Activated CD4-positive, alpha-beta memory T cell treated with anti-CD3 and anti-CD28 coated beads for 36 hours (primary cell): ENCODE measurements at regions of chr2 and their contacts with region 1.

Region 1: GRCh38 chr2:161063157-161063954 is 96.9 kb upstream of the TANK start:
- DNase-seq: peak; percentile 74
- H3K4me3 Mint-ChIP-seq: no peak overlapping the region
- H3K27ac Mint-ChIP-seq: no peak overlapping the region
- H3K4me1 Mint-ChIP-seq: peaks cover 10% of the 10 kb centered on the region
- H3K27me3 Mint-ChIP-seq: no peaks in the 10 kb centered on the region

Region 2: DNA sequence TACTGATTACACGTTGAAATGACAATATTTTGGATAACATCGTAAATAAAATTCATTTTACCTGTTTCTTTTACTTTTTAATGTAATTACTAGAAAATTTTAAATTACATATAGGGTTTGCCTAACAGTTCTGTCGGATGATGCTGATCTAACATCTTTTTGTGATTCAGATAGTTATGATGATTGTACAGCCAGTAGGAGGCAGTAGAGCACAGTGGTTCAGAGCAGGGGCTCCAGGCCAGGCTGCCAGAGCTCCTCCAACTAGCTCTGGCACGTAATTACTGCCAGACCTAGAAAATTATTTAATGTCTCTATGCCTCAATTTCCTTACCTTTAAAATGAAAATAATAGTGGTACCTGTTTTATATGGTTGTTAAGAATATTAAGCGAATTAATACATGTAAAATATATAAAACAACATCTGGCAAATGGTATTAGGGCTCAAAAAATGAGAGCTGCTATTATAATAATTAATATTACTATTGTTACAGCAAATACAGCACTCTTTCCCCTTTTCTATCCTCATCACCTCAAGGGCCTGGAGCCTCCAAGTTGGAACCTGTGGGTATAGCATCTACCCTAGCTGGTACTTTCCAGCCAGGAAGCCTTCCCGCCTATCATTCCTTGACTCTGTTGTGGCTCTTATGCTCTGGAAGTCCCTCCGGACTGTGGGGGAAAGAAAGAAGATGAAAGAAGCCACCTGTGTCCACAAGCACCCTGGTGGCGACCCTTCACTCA is 953.3 kb before region 1 on chr2:
- CTCF ChIA-PET with region 1: interaction called, 26 read pairs
- POLR2A ChIA-PET with region 1: no interaction called
- intact Hi-C with region 1: loop called (anchors 1 kb)
- DNase-seq: peak; percentile 65
- H3K4me3 Mint-ChIP-seq: no peak overlapping the region
- H3K27ac Mint-ChIP-seq: no peak overlapping the region
- H3K4me1 Mint-ChIP-seq: no peaks in the 10 kb centered on the region
- H3K27me3 Mint-ChIP-seq: peaks cover 21% of the 10 kb centered on the region

Region 3: DNA sequence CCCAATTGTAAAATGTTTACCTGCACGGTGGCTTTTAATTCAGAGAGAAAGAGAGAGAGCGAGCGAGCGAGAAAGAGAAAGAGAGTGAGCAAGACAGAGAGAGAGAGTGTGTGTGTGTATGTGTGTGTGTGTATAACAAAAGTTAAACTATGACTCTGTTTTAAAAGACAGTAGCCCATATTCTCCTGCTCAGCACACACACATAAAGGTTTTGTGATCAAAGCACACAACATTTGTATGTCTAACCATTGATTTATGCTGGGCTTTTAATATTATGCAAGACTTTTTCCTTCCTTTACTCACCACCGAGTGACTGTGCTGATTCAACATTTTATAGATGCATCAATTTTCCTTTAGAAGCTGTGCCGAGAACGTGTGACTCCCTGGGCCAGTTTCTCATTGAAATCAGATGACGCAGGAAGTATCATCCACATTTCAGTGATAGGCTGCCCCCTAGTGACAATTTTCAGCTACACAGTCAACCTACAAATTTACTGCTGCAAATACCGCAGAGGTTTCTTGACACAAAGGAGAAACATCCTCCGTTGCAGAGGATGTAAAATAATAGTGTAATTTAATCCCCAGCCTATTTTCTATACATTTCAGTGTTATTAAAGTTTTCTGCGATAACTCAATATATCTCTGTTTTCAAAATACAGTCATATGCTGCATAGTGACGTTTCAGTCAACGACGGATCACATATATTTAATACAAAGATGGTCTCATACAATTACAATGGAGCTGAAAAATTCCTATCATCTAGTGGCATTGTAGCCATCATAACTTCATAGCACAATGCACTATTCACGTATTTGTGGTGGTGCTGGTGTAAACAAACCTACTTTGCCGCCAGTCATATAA is 69.0 kb before region 1 on chr2:
- CTCF ChIA-PET with region 1: interaction called, 27 read pairs
- POLR2A ChIA-PET with region 1: no interaction called
- intact Hi-C with region 1: loop called (anchors 5 kb)
- DNase-seq: peak; percentile 71
- H3K4me3 Mint-ChIP-seq: no peak overlapping the region
- H3K27ac Mint-ChIP-seq: no peak overlapping the region
- H3K4me1 Mint-ChIP-seq: peaks cover 6% of the 10 kb centered on the region
- H3K27me3 Mint-ChIP-seq: no peaks in the 10 kb centered on the region

Region 4: DNA sequence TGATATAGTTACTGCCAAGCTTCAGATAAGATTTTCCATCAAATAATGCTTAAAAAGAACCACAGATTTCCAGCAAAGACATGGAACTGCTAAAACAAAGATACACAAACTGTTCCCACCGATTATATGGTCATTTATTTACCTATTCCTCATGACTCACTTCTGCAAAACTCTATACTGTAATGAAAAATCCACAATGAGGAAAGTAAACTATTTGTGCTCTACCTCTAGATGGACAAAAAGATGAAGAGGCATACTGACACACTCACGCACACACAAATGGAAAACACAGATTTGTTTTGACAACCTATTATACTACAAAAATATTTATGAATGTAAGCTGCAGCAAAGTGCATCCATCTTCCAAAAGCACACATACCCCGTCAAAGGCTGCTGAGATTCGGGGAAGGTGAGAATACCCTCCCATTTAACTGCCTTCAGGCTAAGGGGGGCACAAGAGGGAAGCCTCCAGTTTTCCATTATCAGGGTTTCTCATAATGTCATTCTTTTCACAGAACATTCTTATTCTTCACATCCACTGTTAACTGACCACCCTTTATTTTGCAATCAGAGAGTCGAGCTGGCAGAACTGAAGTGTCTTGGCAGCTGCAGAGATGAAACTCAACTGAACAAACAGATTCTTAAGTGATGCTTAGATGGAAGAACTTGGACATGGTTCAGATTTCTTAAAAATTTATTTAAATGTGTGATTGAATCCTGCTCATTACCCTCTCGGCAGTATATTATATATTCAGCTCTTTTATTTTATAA is 19.1 kb before region 1 on chr2:
- CTCF ChIA-PET with region 1: interaction called, 13 read pairs
- POLR2A ChIA-PET with region 1: no interaction called
- intact Hi-C with region 1: no loop called
- DNase-seq: no peak
- H3K4me3 Mint-ChIP-seq: no peak overlapping the region
- H3K27ac Mint-ChIP-seq: no peak overlapping the region
- H3K4me1 Mint-ChIP-seq: no peaks in the 10 kb centered on the region
- H3K27me3 Mint-ChIP-seq: peaks cover 14% of the 10 kb centered on the region

Region 5: DNA sequence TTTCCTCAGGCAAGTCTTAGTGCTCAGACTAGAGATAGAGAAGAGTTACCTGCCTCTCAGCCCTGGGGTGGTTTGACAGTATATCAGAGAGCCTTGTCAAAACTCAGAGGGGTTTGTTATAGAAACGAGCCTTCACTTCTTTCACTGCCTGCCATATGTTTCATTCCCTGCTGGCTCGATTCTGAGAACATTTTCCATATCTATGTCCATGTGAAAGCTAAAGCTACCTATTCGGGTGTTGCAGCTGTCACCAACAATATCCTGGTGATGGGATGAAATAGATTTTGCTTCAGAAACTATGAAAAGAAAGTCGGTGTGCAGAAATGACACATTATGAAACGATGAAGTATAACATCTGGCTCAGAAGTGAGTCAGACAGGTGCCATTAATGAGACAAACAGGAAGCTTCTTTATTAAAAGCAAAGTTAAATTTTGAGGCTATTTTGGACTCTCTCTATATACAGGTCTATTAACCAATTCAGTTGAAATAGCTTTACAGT is 40.7 kb after region 1 on chr2:
- CTCF ChIA-PET with region 1: interaction called, 11 read pairs
- POLR2A ChIA-PET with region 1: no interaction called
- intact Hi-C with region 1: no loop called
- DNase-seq: peak; percentile 22
- H3K4me3 Mint-ChIP-seq: no peak overlapping the region
- H3K27ac Mint-ChIP-seq: no peak overlapping the region
- H3K4me1 Mint-ChIP-seq: peaks cover 19% of the 10 kb centered on the region
- H3K27me3 Mint-ChIP-seq: no peaks in the 10 kb centered on the region

Region 6: GRCh38 chr2:161136696-161137324 is 73.5 kb after region 1 on chr2:
- CTCF ChIA-PET with region 1: interaction called, 14 read pairs
- POLR2A ChIA-PET with region 1: no interaction called
- intact Hi-C with region 1: no loop called
- DNase-seq: peak; percentile 35
- H3K4me3 Mint-ChIP-seq: peak overlapping the region; percentile 96
- H3K27ac Mint-ChIP-seq: peak overlapping the region; percentile 100
- H3K4me1 Mint-ChIP-seq: peaks cover 45% of the 10 kb centered on the region
- H3K27me3 Mint-ChIP-seq: no peaks in the 10 kb centered on the region

Region 7: GRCh38 chr2:161273038-161273760 is 209.8 kb after region 1 on chr2:
- CTCF ChIA-PET with region 1: interaction called, 17 read pairs
- POLR2A ChIA-PET with region 1: no interaction called
- intact Hi-C with region 1: loop called (anchors 2 kb)
- DNase-seq: no peak
- H3K4me3 Mint-ChIP-seq: no peak overlapping the region
- H3K27ac Mint-ChIP-seq: no peak overlapping the region
- H3K4me1 Mint-ChIP-seq: no peaks in the 10 kb centered on the region
- H3K27me3 Mint-ChIP-seq: no peaks in the 10 kb centered on the region